Activated naive CD4-positive, alpha-beta T cell treated with anti-CD3 and anti-CD28 coated beads for 36 hours (primary cell): ENCODE measurements at regions of chr13 and their contacts with region 1.

Region 1: DNA sequence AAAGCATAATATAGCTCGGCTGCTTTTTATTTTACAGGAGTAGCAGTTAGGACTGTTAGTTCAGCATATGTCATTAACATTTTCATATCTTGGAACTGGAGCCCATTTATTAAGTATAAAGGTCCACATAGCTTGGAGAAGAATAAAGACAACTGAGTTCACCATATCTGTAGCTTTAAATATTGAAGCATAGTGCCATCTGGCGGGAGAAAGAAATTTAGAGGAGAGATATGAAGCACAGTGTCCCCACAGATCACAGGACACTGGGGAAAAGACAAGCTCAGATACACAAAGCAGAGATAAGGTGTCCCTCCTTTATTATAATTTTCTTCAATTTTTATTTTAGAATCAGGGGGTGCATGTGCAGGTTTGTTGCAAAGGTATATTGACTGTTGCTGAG is 104.7 kb upstream of the FREM2 start:
- DNase-seq: peak; percentile 4
- H3K4me3 Mint-ChIP-seq: no peak overlapping the region
- H3K27ac Mint-ChIP-seq: no peak overlapping the region
- H3K4me1 Mint-ChIP-seq: no peaks in the 10 kb centered on the region
- H3K27me3 Mint-ChIP-seq: no peaks in the 10 kb centered on the region

Region 2: DNA sequence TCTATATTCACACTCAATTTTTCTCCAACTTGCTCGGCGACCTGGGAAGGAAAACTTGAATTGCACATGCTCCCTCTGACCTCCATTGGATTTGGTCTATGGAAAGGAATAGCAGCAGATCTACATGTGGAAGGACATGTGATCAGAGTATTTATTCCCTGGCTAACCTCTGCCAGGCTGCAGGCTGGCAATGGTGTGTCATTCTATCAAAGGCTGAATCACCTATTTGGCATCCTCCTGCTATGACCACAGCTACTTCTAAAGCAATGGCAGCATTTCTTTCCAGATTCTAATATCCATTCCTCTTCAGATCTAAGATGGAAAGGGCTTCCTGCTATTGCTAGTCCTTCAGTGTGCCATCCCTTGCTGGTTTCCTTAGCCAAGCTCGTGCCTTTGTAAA is 39.5 kb before region 1 on chr13:
- CTCF ChIA-PET with region 1: no interaction called
- intact Hi-C with region 1: no loop called
- DNase-seq: no peak
- H3K4me3 Mint-ChIP-seq: no peak overlapping the region
- H3K27ac Mint-ChIP-seq: no peak overlapping the region
- H3K4me1 Mint-ChIP-seq: no peaks in the 10 kb centered on the region
- H3K27me3 Mint-ChIP-seq: no peaks in the 10 kb centered on the region

Region 3: DNA sequence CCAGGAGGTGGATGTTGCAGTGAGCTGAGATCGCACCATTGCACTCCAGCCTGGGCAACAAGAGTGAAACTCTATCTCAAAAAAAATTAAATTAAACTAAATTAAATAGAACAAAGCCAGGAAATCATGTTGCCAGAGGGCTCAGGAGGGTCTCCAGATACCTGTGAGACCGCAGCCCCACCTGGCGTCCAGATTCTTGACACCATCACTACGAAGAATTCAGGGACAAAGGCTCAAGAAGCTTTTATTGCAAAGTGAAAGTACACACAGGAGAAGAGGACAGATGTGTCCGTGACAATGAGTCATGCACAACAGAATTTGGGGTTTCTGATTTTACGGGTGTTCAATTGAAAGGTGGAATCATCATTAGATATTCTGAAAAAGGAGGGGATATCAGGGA is 331.9 kb after region 1 on chr13:
- CTCF ChIA-PET with region 1: no interaction called
- intact Hi-C with region 1: loop called (anchors 5 kb)
- DNase-seq: no peak
- H3K4me3 Mint-ChIP-seq: no peak overlapping the region
- H3K27ac Mint-ChIP-seq: no peak overlapping the region
- H3K4me1 Mint-ChIP-seq: no peaks in the 10 kb centered on the region
- H3K27me3 Mint-ChIP-seq: peaks cover 11% of the 10 kb centered on the region

Region 4: DNA sequence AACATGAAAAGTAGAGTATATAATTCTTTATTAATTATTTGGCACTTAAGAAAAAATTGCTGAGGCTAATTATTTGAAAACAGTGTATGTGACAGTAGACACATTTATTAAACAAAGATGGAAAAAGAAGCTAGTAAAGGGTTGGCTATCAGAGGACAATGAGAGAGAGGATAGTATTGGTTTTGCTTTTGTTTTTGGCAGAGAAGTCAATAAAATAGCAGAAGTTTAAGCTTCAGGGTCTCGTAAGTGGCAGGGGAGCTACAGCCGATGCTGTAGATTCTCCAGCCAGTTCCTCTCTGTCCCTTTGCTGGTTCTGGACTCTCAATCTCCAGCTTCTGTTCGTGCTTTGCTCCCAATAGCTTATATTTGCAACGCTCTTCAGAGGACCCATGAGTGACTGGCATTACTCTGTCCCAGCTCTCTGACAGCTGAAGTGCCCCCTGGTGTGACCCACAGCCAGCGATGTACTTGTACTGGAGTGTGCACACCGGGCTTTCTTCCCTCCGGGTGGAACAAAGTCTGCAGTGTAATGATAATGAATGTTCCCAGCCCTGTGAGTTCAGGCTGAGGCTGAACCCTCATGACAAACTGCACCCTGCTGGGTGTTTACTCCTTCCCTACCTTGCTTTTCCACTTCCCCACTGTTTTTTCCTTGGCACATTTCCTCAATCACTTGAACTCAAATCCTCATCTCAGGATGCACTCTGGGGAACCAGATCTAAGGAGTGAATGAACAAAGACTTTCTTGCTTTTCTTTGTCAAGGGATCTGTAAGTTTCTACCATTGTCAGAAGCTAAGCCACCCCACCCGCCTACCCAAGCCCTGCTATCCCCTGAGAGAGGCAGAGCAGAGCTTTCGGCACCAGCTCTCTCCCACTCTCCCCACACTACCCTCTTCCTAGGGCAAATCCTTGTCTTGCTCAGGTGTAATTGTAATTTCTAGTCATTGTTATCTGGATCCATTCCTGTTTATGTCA is 766.1 kb after region 1 on chr13:
- CTCF ChIA-PET with region 1: no interaction called
- intact Hi-C with region 1: no loop called
- DNase-seq: no peak
- H3K4me3 Mint-ChIP-seq: no peak overlapping the region
- H3K27ac Mint-ChIP-seq: no peak overlapping the region
- H3K4me1 Mint-ChIP-seq: no peaks in the 10 kb centered on the region
- H3K27me3 Mint-ChIP-seq: peaks cover 10% of the 10 kb centered on the region